PC-3 (cell line): ENCODE measurements at regions of chr4 and their contacts with region 1.

Region 1: GRCh38 chr4:78454016-78454415 is 97.6 kb upstream of the ANXA3 start:
- DNase-seq: no peak
- ATAC-seq: no peak
- H3K4me3 ChIP-seq: no peak overlapping the region
- H3K27ac ChIP-seq: no peak overlapping the region
- H3K4me1 ChIP-seq: no peaks in the 10 kb centered on the region
- H3K27me3 ChIP-seq: no peaks in the 10 kb centered on the region
- CTCF ChIP-seq: no peak

Region 2: GRCh38 chr4:78386679-78387078 is 67.3 kb before region 1 on chr4:
- CTCF ChIA-PET with region 1: no interaction called
- POLR2A ChIA-PET with region 1: no interaction called
- intact Hi-C with region 1: no loop called
- DNase-seq: no peak
- ATAC-seq: no peak
- H3K4me3 ChIP-seq: no peak overlapping the region
- H3K27ac ChIP-seq: no peak overlapping the region
- H3K4me1 ChIP-seq: no peaks in the 10 kb centered on the region
- H3K27me3 ChIP-seq: no peaks in the 10 kb centered on the region
- CTCF ChIP-seq: no peak

Region 3: GRCh38 chr4:78510681-78511080 is 56.7 kb after region 1 on chr4:
- CTCF ChIA-PET with region 1: no interaction called
- POLR2A ChIA-PET with region 1: interaction called, 16 read pairs
- intact Hi-C with region 1: no loop called
- DNase-seq: no peak
- ATAC-seq: no peak
- H3K4me3 ChIP-seq: no peak overlapping the region
- H3K27ac ChIP-seq: no peak overlapping the region
- H3K4me1 ChIP-seq: no peaks in the 10 kb centered on the region
- H3K27me3 ChIP-seq: no peaks in the 10 kb centered on the region
- CTCF ChIP-seq: no peak

Region 4: DNA sequence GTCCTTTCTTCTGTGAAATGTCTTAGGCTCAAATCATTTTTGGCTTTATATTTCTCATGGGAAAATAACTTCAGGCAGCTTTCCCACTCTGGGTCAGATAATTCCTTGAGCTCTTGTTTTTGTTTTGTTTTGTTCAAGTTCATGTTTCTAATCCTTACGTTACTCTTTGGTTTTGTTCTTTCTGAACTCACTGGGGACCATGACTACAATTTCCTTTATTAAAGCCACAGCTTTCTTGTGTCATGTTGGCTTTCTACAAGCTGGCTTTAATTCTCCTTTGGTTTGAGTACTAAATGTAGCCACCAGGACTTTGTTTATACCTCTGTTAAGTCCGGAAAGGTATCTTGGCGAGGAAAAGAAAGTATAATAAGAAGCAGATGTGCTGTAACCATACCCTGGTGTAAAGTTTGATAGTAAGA is 66.8 kb after region 1 on chr4:
- CTCF ChIA-PET with region 1: no interaction called
- POLR2A ChIA-PET with region 1: no interaction called
- intact Hi-C with region 1: no loop called
- DNase-seq: no peak
- ATAC-seq: no peak
- H3K4me3 ChIP-seq: no peak overlapping the region
- H3K27ac ChIP-seq: no peak overlapping the region
- H3K4me1 ChIP-seq: no peaks in the 10 kb centered on the region
- H3K27me3 ChIP-seq: no peaks in the 10 kb centered on the region
- CTCF ChIP-seq: no peak